ENCODE measurements at regions of chr9 and their contacts with region 1.

Region 1: DNA sequence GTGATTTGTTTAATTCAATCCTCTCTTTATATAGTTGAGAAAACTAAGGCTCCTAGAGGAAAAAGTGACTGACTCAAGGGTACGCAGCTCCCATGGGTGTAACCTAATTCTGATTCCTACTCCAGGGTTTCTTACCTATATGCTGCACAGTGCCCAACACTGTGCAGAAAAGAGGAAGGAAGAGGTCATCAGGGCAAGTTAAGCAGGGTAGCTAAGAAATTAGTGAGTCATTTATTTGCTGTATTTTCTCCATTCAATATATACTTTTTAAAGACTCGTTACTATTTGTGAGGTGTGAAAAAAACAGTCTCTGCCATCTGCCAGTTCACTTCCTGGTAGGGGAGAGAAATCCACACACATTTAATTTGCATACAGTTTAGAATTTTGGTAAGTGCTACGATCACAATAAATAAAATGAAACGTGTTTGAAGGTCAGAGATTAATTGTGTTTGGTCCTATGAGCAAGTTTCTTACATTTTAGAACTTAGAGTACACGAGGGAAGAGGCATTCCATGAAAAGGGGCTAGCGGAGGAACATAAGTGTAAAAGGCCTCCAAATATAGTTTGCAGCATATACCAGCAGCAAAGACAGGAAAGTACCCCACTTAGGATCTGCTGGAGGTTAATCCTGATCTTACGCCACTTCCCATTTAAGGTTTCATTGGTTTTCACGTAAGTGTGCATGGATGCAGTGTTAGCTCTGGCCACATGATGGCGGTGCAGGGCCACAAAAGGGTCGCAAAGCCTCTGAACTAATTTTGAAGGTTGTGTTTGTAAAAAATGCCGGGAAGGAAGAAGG is 59.9 kb upstream of the TLR4 start:
- DNase-seq: peak; percentile 77
- H3K4me3 ChIP-seq: no peak overlapping the region
- H3K27ac ChIP-seq: no peak overlapping the region
- H3K4me1 ChIP-seq: no peaks in the 10 kb centered on the region
- H3K27me3 ChIP-seq: no peaks in the 10 kb centered on the region
- CTCF ChIP-seq: peak; percentile 95

Region 2: GRCh38 chr9:117494401-117495090 is 149.8 kb before region 1 on chr9:
- intact Hi-C with region 1: no loop called
- DNase-seq: no peak
- H3K4me3 ChIP-seq: no peak overlapping the region
- H3K27ac ChIP-seq: no peak overlapping the region
- H3K4me1 ChIP-seq: no peaks in the 10 kb centered on the region
- H3K27me3 ChIP-seq: no peaks in the 10 kb centered on the region
- CTCF ChIP-seq: no peak

Region 3: DNA sequence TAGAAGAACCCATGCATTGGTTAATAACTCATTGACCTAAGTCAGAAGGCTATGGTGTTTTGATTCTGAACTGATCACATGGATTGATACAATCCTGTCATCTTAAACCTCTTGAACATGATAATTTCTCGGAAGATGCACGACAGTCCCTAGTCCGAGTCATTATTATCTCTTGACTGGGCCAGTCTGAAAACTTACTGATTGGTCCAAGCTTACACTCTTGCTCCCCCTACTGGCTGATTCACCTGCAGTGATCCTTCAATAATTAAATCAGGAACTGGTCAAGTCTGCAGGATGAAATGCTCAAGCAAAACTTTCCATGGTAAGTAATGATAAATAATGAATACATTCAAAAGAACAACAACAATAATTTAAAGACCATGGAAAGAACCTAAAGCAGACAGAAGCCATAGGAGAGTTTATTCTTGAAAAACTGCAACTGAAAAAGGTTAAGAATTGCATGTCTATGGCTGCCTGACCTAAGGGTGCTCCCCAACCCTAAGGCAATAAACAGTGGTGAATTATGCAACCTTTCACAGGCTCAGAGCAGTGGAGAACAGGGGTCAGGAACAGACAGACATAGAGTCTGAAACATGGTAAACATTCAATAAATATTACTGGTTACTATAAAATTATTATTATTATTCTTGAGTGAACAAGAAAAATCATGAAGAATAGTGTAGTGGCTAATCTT is 1645.6 kb after region 1 on chr9:
- intact Hi-C with region 1: loop called (anchors 10 kb)
- DNase-seq: peak; percentile 57
- H3K4me3 ChIP-seq: no peak overlapping the region
- H3K27ac ChIP-seq: no peak overlapping the region
- H3K4me1 ChIP-seq: no peaks in the 10 kb centered on the region
- H3K27me3 ChIP-seq: no peaks in the 10 kb centered on the region
- CTCF ChIP-seq: peak; percentile 52